ENCODE measurements at regions of chr11 and their contacts with region 1.

Region 1: GRCh38 chr11:72293910-72294615 is 50.1 kb upstream of the PHOX2A start:
- DNase-seq: no peak
- H3K4me3 Mint-ChIP-seq: no peak overlapping the region
- H3K27ac Mint-ChIP-seq: no peak overlapping the region
- H3K4me1 Mint-ChIP-seq: no peaks in the 10 kb centered on the region
- H3K27me3 Mint-ChIP-seq: no peaks in the 10 kb centered on the region

Region 2: GRCh38 chr11:72174299-72175070 is 119.6 kb before region 1 on chr11:
- intact Hi-C with region 1: no loop called
- DNase-seq: no peak
- H3K4me3 Mint-ChIP-seq: no peak overlapping the region
- H3K27ac Mint-ChIP-seq: peak overlapping the region; percentile 35
- H3K4me1 Mint-ChIP-seq: no peaks in the 10 kb centered on the region
- H3K27me3 Mint-ChIP-seq: peaks cover 10% of the 10 kb centered on the region

Region 3: DNA sequence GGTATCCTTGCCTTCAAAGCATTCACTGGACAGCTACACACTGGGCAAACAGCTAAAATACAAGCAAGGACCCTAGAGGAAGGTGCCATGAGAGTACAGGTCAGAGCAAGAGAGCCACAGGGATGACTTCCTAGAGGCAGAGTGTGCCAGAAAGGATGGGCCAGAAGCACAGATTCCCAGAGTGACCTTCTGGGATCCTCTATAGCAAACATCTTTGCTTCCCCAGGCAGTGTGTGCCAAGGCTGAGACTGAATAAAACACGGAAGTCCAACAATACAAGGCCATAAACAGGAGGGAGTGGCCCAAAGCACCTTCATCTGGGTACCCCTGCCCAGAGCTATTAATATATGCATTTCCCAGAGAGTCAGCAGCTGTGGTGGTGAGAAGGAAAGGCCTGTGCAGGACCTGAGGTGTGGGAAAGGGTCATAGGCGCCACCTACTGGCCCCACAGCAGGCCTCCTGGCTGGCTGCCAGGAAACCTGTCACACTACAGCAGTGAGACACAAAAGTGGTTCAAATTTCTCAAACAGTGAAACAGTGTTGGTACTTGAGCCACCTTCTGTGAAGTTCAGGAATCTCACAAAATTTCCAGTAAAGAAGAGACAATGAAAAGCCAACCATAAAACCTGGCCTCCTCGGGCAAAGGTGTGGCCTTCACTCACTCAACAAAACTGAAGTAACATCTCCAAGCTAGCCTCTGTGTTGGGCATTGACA is 120.0 kb after region 1 on chr11:
- intact Hi-C with region 1: loop called (anchors 1 kb)
- DNase-seq: peak; percentile 93
- H3K4me3 Mint-ChIP-seq: no peak overlapping the region
- H3K27ac Mint-ChIP-seq: no peak overlapping the region
- H3K4me1 Mint-ChIP-seq: peaks cover 29% of the 10 kb centered on the region
- H3K27me3 Mint-ChIP-seq: no peaks in the 10 kb centered on the region